BJ (cell line): ENCODE measurements at regions of chr11 and their contacts with region 1.

Region 1: GRCh38 chr11:36702330-36703055 is 104.5 kb upstream of the RAG2 start:
- DNase-seq: peak; percentile 5
- H3K4me3 ChIP-seq: no peak overlapping the region
- H3K27me3 ChIP-seq: no peaks in the 10 kb centered on the region; the same call in 1 of the 2 replicates
- CTCF ChIP-seq: peak; percentile 76

Region 2: GRCh38 chr11:36738292-36738861 is 35.9 kb after region 1 on chr11:
- CTCF ChIA-PET with region 1: interaction called, 25 read pairs
- POLR2A ChIA-PET with region 1: no interaction called
- DNase-seq: no peak
- H3K4me3 ChIP-seq: no peak overlapping the region
- H3K27me3 ChIP-seq: no peaks in the 10 kb centered on the region
- CTCF ChIP-seq: no peak